ENCODE measurements at regions of chr13 and their contacts with region 1.

Region 1: GRCh38 chr13:50170447-50171037 is 155.3 kb downstream of the KCNRG start:
- DNase-seq: peak; percentile 26
- H3K4me3 ChIP-seq: no peak overlapping the region
- H3K27ac ChIP-seq: no peak overlapping the region
- H3K4me1 ChIP-seq: no peaks in the 10 kb centered on the region
- H3K27me3 ChIP-seq: no peaks in the 10 kb centered on the region
- CTCF ChIP-seq: peak in 1 of 2 donors; percentile 47

Region 2: DNA sequence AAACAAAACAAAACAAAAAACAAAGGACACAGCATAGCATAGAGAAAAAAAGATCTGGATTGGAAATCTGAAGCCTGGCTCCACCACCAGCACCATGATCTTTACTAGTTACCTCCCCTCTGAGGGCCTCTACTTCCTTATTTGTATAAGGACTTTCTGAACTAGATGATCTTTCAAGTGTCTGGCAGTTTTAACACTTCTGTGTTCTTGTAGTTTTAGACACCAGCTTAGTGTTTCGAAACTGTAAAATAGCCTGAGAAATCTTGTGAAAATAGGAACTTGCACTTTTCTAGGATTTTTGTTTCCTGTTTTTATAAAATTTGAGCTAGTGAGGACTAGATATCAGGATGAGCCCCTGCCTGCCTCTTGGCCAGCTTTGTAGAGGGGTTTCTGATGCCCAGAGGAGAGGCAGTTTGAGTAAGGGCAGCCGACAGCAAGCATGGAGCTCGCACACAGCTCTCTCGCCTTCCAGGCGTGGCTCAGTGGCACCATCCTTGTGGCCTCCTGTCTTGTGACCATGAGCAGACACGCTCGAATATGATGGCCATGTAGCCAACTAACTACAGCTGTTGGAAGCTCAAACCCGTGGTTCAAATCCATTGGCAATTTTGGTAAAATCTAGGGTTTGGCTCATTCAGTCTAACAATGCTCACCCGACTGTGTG is 163.7 kb after region 1 on chr13:
- CTCF ChIA-PET with region 1: no interaction called
- dilution Hi-C with region 1: no loop called
- in situ Hi-C with region 1: no loop called
- intact Hi-C with region 1: no loop called
- DNase-seq: no peak
- H3K4me3 ChIP-seq: no peak overlapping the region
- H3K27ac ChIP-seq: no peak overlapping the region
- H3K4me1 ChIP-seq: no peaks in the 10 kb centered on the region
- H3K27me3 ChIP-seq: no peaks in the 10 kb centered on the region
- CTCF ChIP-seq: no peak

Region 3: DNA sequence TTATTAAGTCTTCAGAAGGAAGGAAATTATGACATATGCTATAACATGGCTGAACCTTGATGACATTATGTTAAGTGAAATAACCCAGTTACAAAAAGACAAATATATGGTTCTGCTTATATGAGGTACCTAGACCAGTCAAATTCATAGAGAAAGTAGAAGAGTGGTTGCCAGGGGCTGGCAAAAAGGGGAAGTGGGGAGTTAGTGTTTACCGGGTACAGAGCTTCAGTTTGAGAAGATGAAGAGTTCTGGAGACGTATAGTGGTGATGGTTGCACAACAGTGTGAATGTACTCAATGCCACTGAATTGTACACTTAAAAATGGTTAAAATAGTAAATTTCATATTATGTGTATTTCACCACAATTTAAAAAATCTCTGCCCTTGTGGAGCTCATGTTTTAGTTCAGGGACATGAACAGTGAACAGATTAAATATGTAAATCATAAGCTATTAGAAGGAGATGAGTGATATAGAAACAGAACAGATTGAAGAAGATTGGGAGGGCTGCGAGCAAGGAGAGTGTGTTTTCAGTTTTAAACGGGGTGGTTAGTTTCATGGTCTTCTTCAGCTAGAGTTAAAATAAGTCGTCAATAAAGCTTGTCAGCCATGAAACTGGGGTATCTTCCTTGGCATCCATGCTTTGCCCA is 199.9 kb after region 1 on chr13:
- CTCF ChIA-PET with region 1: no interaction called
- dilution Hi-C with region 1: no loop called
- in situ Hi-C with region 1: no loop called
- intact Hi-C with region 1: loop called (anchors 10 kb)
- DNase-seq: no peak
- H3K4me3 ChIP-seq: no peak overlapping the region
- H3K27ac ChIP-seq: no peak overlapping the region
- H3K4me1 ChIP-seq: no peaks in the 10 kb centered on the region
- H3K27me3 ChIP-seq: no peaks in the 10 kb centered on the region
- CTCF ChIP-seq: no peak

Measured in mammary epithelial cell (primary cell).